ENCODE measurements at regions of chr3 and their contacts with region 1.

Region 1: DNA sequence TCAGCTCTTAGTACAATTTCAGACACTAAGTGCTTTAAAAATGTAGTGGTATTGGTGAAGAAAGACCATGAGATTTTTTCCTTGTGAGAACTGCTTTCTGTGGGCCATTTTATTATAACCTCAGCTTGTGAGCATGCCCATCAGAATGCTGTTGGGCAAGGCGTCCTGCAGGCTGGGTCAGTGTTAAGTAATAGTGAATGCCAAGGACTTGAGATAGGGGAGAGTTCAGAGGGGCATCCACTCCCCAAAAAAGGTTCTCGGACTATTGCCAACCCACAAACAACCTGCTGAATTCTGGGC is 187.8 kb downstream of the GHSR start:
- DNase-seq: peak; percentile 82
- H3K4me3 Mint-ChIP-seq: peak overlapping the region; percentile 17
- H3K27ac Mint-ChIP-seq: peak overlapping the region; percentile 76
- H3K4me1 Mint-ChIP-seq: peaks cover 81% of the 10 kb centered on the region
- H3K27me3 Mint-ChIP-seq: no peaks in the 10 kb centered on the region
- CTCF ChIP-seq: no peak

Region 2: GRCh38 chr3:171950373-171950772 is 310.1 kb before region 1 on chr3:
- CTCF ChIA-PET with region 1: no interaction called
- intact Hi-C with region 1: loop called (anchors 5 kb)
- DNase-seq: no peak
- H3K4me3 Mint-ChIP-seq: no peak overlapping the region
- H3K27ac Mint-ChIP-seq: peak overlapping the region; percentile 81
- H3K4me1 Mint-ChIP-seq: peaks cover 59% of the 10 kb centered on the region
- H3K27me3 Mint-ChIP-seq: no peaks in the 10 kb centered on the region
- CTCF ChIP-seq: no peak

Region 3: DNA sequence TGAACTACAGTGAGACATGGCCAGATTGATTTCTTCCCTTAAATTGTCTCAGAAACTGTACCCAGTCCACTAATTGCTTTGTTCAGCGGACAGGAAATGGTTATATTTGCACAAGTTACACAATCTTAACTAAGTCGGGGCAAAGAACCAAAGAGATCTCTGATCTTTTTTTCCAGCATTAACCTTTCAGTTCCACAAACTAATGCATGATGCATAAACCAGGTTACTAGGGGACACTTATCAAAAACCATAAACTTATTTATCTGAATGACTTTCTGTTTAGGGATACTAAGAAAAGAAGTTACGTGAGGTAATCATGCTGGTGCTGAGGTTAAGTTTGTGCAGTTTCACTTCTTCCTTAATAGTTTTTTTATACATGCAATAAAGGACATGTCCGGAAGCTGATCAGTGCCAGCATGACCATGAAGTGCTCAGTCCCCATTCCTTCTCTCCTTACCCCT is 198.7 kb before region 1 on chr3:
- CTCF ChIA-PET with region 1: no interaction called
- intact Hi-C with region 1: loop called (anchors 5 kb)
- DNase-seq: no peak
- H3K4me3 Mint-ChIP-seq: peak overlapping the region; percentile 39
- H3K27ac Mint-ChIP-seq: peak overlapping the region; percentile 51
- H3K4me1 Mint-ChIP-seq: peaks cover 87% of the 10 kb centered on the region
- H3K27me3 Mint-ChIP-seq: no peaks in the 10 kb centered on the region
- CTCF ChIP-seq: no peak

Region 4: GRCh38 chr3:172217877-172218276 is 42.6 kb before region 1 on chr3:
- CTCF ChIA-PET with region 1: no interaction called
- intact Hi-C with region 1: loop called (anchors 2 kb)
- DNase-seq: no peak
- H3K4me3 Mint-ChIP-seq: no peak overlapping the region
- H3K27ac Mint-ChIP-seq: peak overlapping the region; percentile 17
- H3K4me1 Mint-ChIP-seq: peaks cover 92% of the 10 kb centered on the region
- H3K27me3 Mint-ChIP-seq: no peaks in the 10 kb centered on the region
- CTCF ChIP-seq: no peak

Region 5: GRCh38 chr3:172675441-172676193 is 415.2 kb after region 1 on chr3:
- CTCF ChIA-PET with region 1: no interaction called
- intact Hi-C with region 1: no loop called
- DNase-seq: peak; percentile 48
- H3K4me3 Mint-ChIP-seq: no peak overlapping the region
- H3K27ac Mint-ChIP-seq: no peak overlapping the region
- H3K4me1 Mint-ChIP-seq: peaks cover 51% of the 10 kb centered on the region
- H3K27me3 Mint-ChIP-seq: no peaks in the 10 kb centered on the region
- CTCF ChIP-seq: peak; percentile 89

Measured in Calu3 (cell line).